HepG2 (cell line): ENCODE measurements at regions of chr3 and their contacts with region 1.

Region 1: DNA sequence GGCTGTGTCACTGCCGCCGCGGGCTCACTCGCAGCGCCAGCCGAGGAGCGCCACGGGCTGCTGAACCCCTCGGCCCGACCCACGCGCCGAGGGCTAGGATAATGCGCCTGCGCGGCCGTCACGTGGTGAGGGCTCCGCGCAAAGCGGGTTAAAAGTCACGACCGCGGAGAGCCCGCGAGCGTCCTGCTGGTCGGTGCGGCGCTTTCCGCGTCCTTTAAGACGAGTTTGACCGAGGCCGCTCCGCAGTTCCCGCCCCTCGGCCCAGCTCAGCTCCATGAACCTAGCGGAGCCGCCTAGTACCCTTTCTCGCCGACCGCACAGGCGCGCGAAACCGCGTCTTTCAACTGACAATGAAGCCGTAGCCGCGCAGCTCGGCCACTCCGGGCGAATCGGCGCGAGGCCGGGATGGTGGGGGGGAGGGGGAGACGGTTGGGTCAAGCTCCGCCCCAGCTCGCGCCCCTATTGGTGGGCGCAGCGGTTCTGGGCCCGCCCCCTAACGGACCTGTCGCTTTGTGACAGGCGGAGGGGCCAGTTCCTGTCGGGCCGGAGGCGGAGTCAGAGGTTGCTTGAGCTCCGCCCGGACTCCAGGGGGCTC is 636 bp upstream of the STT3B start:
- DNase-seq: peak; percentile 94
- ATAC-seq: peak; percentile 89
- H3K4me3 ChIP-seq: peak overlapping the region; percentile 91 to 97 (median 91); a peak in 5 of 6 replicates
- H3K27ac ChIP-seq: peak overlapping the region; percentile 99
- H3K4me1 ChIP-seq: peaks cover 33% of the 10 kb centered on the region
- H3K27me3 ChIP-seq: no peaks in the 10 kb centered on the region; a peak in 1 of 5 replicates
- CTCF ChIP-seq: peak; percentile 52
- EP300 ChIP-seq: peak in 1 of 2 experiments; percentile 42; a peak in 1 of 4 replicates
- POLR2A ChIP-seq: peak; percentile 87 to 95
- RAD21 ChIP-seq: peak; percentile 77

Region 2: DNA sequence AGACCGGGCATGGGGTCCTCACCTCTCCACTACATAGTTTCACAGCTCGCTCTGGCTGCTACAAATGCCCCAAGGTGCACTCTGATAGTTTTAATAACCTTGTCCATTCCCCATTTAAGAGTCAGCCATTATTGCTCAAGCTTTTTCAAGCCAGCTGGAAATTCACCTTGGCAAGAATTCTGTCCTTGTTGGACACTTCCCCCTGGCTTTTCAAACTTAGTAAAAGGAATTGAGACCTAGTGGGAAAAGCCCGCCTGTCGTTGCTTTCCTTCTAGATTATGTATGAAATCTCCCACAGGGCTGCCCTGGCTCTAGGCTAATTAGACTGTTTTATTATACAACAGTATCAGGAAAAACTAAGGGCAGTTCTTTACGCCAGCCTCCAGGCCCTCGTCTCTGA is 344.0 kb before region 1 on chr3:
- CTCF ChIA-PET with region 1: no interaction called
- POLR2A ChIA-PET with region 1: interaction called, 10 read pairs
- in situ Hi-C with region 1: no loop called
- intact Hi-C with region 1: no loop called
- DNase-seq: no peak
- ATAC-seq: no peak
- H3K4me3 ChIP-seq: no peak overlapping the region
- H3K27ac ChIP-seq: peak overlapping the region; percentile 83
- H3K4me1 ChIP-seq: peaks cover 39% of the 10 kb centered on the region
- H3K27me3 ChIP-seq: no peaks in the 10 kb centered on the region
- CTCF ChIP-seq: no peak
- EP300 ChIP-seq: no peak
- POLR2A ChIP-seq: no peak
- RAD21 ChIP-seq: no peak

Region 3: DNA sequence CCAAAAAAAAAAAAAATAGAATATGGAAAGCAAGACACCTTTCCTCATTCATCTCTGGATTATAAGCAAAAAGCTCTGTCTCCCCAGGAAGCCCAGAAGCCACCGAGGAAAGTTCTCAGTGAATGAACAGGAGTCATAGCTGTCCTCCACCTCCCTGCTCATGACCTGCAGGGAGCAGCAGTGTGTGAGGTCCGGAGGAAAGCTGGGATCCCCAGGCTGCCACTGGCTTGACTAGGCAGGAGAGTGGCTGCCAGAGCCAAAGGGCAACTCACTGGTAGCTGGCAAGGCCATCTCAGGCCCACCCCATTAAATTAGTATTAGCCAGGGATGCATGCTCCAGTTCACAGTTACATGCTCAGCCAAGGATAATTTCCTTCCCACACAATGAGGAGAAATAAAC is 191.0 kb before region 1 on chr3:
- CTCF ChIA-PET with region 1: no interaction called
- POLR2A ChIA-PET with region 1: interaction called, 12 read pairs
- in situ Hi-C with region 1: no loop called
- intact Hi-C with region 1: no loop called
- DNase-seq: peak; percentile 52
- ATAC-seq: peak; percentile 100
- H3K4me3 ChIP-seq: no peak overlapping the region
- H3K27ac ChIP-seq: no peak overlapping the region
- H3K4me1 ChIP-seq: peaks cover 19% of the 10 kb centered on the region
- H3K27me3 ChIP-seq: no peaks in the 10 kb centered on the region
- CTCF ChIP-seq: peak; percentile 80
- EP300 ChIP-seq: no peak
- POLR2A ChIP-seq: no peak
- RAD21 ChIP-seq: peak; percentile 84

Region 4: GRCh38 chr3:31488450-31489017 is 43.6 kb before region 1 on chr3:
- CTCF ChIA-PET with region 1: no interaction called
- POLR2A ChIA-PET with region 1: no interaction called
- in situ Hi-C with region 1: no loop called
- intact Hi-C with region 1: no loop called
- DNase-seq: no peak
- ATAC-seq: no peak
- H3K4me3 ChIP-seq: no peak overlapping the region
- H3K27ac ChIP-seq: no peak overlapping the region
- H3K4me1 ChIP-seq: peaks cover 10% of the 10 kb centered on the region
- H3K27me3 ChIP-seq: no peaks in the 10 kb centered on the region
- CTCF ChIP-seq: no peak
- EP300 ChIP-seq: no peak
- POLR2A ChIP-seq: no peak
- RAD21 ChIP-seq: no peak

Region 5: GRCh38 chr3:31544634-31545033 is 12.5 kb after region 1 on chr3:
- CTCF ChIA-PET with region 1: no interaction called
- POLR2A ChIA-PET with region 1: interaction called, 13 read pairs
- in situ Hi-C with region 1: no loop called
- intact Hi-C with region 1: no loop called
- DNase-seq: peak; percentile 16
- ATAC-seq: peak; percentile 68
- H3K4me3 ChIP-seq: no peak overlapping the region
- H3K27ac ChIP-seq: no peak overlapping the region
- H3K4me1 ChIP-seq: peaks cover 24% of the 10 kb centered on the region
- H3K27me3 ChIP-seq: no peaks in the 10 kb centered on the region
- CTCF ChIP-seq: no peak
- EP300 ChIP-seq: no peak
- POLR2A ChIP-seq: no peak
- RAD21 ChIP-seq: no peak

Region 6: GRCh38 chr3:32106280-32106928 is 574.3 kb after region 1 on chr3 and contains the start of gene GPD1L:
- CTCF ChIA-PET with region 1: no interaction called
- POLR2A ChIA-PET with region 1: no interaction called
- in situ Hi-C with region 1: no loop called
- intact Hi-C with region 1: loop called (anchors 2 kb)
- DNase-seq: peak; percentile 89
- ATAC-seq: peak; percentile 99
- H3K4me3 ChIP-seq: peak within 1 kb of the TSS; percentile 58 to 79 (median 75)
- H3K27ac ChIP-seq: no peak within 1 kb of the TSS
- H3K4me1 ChIP-seq: peaks cover 57% of the 10 kb centered on the region
- H3K27me3 ChIP-seq: no peaks in the 10 kb centered on the region; a peak in 1 of 5 replicates
- CTCF ChIP-seq: peak; percentile 33; the same call in 1 of the 2 replicates
- EP300 ChIP-seq: no peak
- POLR2A ChIP-seq: peak in 1 of 2 experiments; percentile 71; a peak in 2 of 4 replicates
- RAD21 ChIP-seq: no peak
- total RNA-seq, gene GPD1L: 13.7 and 20.1 TPM in 2 replicates